HEK293 (cell line): ENCODE measurements at regions of chrX and their contacts with region 1.

Region 1: GRCh38 chrX:54044126-54044876 is at the start of gene PHF8:
- H3K4me3 ChIP-seq: peak within 1 kb of the TSS; percentile 74
- H3K27ac ChIP-seq: peak within 1 kb of the TSS; percentile 98
- H3K4me1 ChIP-seq: no peaks in the 10 kb centered on the region
- CTCF ChIP-seq: peak; percentile 76

Region 2: DNA sequence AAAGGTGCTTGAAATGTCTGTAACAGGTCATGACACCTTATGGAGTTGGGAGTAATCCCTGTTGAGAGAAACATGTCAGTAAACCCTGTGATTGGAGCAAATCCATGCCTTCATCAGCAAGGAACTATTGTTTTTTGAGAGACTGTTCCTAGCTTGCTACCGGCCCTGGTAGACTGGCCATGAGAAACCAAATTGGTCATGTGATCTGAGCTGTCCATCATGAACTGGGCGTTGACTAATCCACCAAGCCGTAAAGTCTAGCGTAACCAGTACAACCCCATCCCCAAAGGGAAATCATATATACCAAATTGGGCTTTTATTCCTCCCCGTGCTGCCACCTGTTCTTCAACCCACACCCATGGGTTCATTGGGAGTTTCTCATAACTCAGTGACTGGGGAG is 143.7 kb before region 1 on chrX:
- CTCF ChIA-PET with region 1: no interaction called
- POLR2A ChIA-PET with region 1: no interaction called
- H3K4me3 ChIP-seq: no peak overlapping the region
- H3K27ac ChIP-seq: no peak overlapping the region
- H3K4me1 ChIP-seq: no peaks in the 10 kb centered on the region
- CTCF ChIP-seq: no peak

Region 3: GRCh38 chrX:54063361-54063760 is 19.1 kb after region 1 on chrX:
- CTCF ChIA-PET with region 1: no interaction called
- POLR2A ChIA-PET with region 1: no interaction called
- H3K4me3 ChIP-seq: no peak overlapping the region
- H3K27ac ChIP-seq: no peak overlapping the region
- H3K4me1 ChIP-seq: no peaks in the 10 kb centered on the region
- CTCF ChIP-seq: no peak

Region 4: DNA sequence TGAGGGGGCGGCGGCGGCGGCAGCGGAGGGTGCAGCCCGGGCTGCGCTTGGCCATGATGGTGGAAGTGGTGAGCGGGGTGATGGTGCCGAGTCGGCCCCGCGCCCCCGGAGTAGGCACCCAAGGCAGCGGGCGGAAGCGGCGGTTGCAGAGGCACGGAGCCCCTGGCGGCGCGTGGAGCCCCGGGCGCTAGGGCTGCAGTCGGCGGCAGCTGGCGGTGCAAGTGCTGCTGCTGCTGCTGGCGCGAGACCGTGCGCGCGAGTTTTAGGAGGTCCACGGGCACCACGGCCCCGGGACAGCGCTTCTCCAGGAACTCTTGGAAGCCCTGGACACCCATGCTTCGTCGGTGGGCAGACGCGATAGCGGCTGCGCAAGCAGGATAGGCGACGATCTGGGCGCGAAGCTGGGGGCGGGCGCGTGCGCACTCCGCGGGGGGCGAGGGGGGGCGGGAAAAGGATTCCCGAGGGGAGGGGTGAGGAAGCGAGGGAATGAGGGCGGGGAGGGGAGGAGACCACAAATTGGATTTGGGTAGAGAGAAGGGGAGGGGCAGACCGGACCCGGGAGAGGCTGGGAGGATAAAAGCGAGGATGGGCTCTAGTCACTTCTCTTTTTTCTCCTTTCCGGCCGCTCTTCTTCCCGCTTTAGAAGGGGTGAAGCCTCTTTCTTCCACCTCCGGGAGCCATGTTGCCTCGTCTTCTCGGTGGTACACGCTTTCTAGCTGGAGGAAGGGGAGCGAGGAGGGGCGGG is 138.7 kb after region 1 on chrX and contains the start of gene FAM120C:
- CTCF ChIA-PET with region 1: no interaction called
- POLR2A ChIA-PET with region 1: interaction called, 36 read pairs
- H3K4me3 ChIP-seq: peak within 1 kb of the TSS; percentile 67
- H3K27ac ChIP-seq: peak within 1 kb of the TSS; percentile 94
- H3K4me1 ChIP-seq: peaks cover 5% of the 10 kb centered on the region; the same call in 1 of the 2 replicates
- CTCF ChIP-seq: 0 out of 2 replicates have a peak, but pooled peaks have one; percentile 8

Region 5: DNA sequence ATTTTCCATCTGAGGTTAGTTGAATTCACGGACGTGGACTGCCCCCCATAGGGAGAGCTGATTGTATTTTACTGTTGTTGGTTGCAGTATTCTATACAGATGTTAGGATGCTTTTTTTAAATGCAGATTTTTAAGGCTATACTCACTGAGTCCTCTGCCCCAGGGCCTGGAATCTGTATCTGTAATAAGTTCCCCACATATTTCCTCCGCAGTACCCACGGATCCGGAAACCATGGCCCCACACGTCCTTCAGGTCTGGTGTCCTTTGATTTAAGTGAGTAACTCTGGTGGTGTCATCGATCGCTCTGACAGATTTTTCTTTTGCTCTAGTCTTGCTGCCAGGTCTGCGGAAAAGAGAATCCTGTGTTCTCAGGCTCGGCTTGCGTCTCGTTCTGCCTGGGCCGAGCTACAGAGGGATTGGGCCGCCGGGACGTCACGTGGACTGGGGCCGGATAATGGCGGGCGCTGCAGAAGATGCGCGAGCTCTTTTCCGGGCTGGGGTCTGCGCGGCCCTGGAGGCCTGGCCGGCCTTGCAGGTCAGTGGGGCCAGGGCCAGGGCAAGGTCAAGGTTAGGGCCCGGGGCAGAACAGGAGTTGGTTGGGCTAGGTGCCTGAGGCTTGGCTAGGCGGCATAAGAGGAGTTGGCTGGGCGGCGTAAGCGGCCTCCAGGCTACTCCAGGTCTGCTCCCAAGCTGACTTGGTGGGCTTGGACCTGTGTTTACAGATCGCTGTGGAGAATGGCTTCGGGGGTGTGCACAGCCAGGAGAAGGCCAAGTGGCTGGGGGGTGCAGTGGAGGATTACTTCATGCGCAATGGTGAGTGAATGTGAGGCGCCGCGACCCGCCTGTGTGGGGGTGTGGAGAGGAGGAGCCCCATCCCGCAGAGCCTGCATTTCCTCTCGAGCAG is 395.9 kb after region 1 on chrX and contains the start of gene TSR2:
- CTCF ChIA-PET with region 1: interaction called, 3 read pairs
- POLR2A ChIA-PET with region 1: interaction called, 10 read pairs
- H3K4me3 ChIP-seq: peak within 1 kb of the TSS; percentile 60
- H3K27ac ChIP-seq: peak within 1 kb of the TSS; percentile 42; the same call in 1 of the 2 replicates
- H3K4me1 ChIP-seq: no peaks in the 10 kb centered on the region
- CTCF ChIP-seq: no peak